A673 (cell line): ENCODE measurements at regions of chr15 and their contacts with region 1.

Region 1: GRCh38 chr15:25508369-25509002 is 69.7 kb upstream of the UBE3A start:
- DNase-seq: peak; percentile 27
- H3K4me3 ChIP-seq: no peak overlapping the region
- H3K27ac ChIP-seq: no peak overlapping the region
- H3K4me1 ChIP-seq: no peaks in the 10 kb centered on the region
- H3K27me3 ChIP-seq: no peaks in the 10 kb centered on the region
- CTCF ChIP-seq: peak; percentile 57

Region 2: DNA sequence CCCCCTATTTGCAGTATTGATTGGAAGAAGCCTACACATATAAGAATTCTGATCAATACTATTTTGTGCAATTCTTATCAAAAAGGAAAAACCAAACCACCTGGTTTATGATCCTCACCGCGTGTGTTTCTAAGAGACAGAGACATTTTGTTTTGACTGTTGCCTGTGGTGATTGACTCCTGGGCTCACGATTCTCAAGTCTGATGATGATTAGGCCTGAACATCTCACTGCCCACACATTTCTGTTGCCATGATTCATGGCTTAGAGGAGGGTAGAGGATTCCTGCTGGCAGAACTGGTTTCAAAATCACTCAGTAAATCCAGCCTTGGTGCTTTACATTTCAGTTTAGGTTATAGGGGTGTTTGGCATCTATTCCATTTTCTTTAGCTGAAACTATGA is 18.6 kb after region 1 on chr15:
- CTCF ChIA-PET with region 1: no interaction called
- POLR2A ChIA-PET with region 1: no interaction called
- intact Hi-C with region 1: no loop called
- DNase-seq: no peak
- H3K4me3 ChIP-seq: no peak overlapping the region
- H3K27ac ChIP-seq: no peak overlapping the region
- H3K4me1 ChIP-seq: no peaks in the 10 kb centered on the region
- H3K27me3 ChIP-seq: no peaks in the 10 kb centered on the region
- CTCF ChIP-seq: no peak

Region 3: DNA sequence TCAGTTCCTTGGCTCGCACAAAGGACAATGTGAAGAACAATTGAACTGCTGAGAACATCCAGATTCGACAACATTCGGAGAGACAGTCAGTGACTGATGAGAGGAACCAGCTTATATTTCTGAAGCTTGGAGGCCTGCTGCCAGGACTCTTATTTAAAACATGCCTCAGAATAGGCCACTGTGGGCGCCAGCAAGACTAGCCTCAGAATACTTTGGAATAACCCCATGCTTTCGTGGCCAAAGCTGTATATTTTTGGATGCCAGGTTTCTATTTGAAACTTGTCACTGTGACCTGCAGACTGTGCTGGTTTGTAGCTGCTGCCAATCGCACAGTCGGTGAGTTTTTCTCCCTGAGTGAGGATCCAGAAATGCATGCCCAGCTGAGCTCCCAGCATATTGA is 60.3 kb after region 1 on chr15:
- CTCF ChIA-PET with region 1: no interaction called
- POLR2A ChIA-PET with region 1: no interaction called
- intact Hi-C with region 1: no loop called
- DNase-seq: no peak
- H3K4me3 ChIP-seq: no peak overlapping the region
- H3K27ac ChIP-seq: no peak overlapping the region
- H3K4me1 ChIP-seq: no peaks in the 10 kb centered on the region
- H3K27me3 ChIP-seq: no peaks in the 10 kb centered on the region
- CTCF ChIP-seq: no peak

Region 4: GRCh38 chr15:25739687-25740121 is 231.2 kb after region 1 on chr15:
- CTCF ChIA-PET with region 1: no interaction called
- POLR2A ChIA-PET with region 1: no interaction called
- intact Hi-C with region 1: no loop called
- DNase-seq: no peak
- H3K4me3 ChIP-seq: no peak overlapping the region
- H3K27ac ChIP-seq: no peak overlapping the region
- H3K4me1 ChIP-seq: no peaks in the 10 kb centered on the region
- H3K27me3 ChIP-seq: no peaks in the 10 kb centered on the region
- CTCF ChIP-seq: no peak

Region 5: DNA sequence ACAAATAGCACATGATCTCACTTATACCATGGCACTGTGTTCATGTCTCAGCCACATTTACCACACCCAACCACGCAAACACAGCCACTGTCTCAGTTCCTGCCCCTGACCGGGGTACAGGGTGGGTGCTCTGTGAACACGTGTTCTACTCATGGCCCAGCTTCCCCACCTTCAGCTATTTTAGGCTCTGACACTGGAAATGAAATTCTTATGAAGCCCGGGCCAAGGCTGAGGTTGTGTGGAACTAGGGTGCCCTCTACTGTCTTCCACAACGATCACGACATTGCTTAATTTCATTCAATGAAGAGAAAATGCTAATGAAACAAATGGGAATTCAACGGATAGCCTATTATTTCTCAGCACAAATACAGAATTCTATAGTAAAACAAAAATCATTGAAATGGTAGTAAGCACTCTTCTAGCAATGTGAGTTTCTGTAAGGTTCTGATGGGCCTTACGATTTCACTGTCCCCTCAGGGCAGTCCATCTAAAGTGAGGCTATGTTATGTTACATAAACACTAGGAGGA is 1356.2 kb after region 1 on chr15:
- CTCF ChIA-PET with region 1: no interaction called
- POLR2A ChIA-PET with region 1: no interaction called
- intact Hi-C with region 1: loop called (anchors 2 kb)
- DNase-seq: peak; percentile 27
- H3K4me3 ChIP-seq: no peak overlapping the region
- H3K27ac ChIP-seq: no peak overlapping the region
- H3K4me1 ChIP-seq: no peaks in the 10 kb centered on the region
- H3K27me3 ChIP-seq: no peaks in the 10 kb centered on the region
- CTCF ChIP-seq: peak; percentile 46